ENCODE measurements at regions of chr14 and their contacts with region 1.

Region 1: GRCh38 chr14:72743626-72744025 is 150.3 kb downstream of the DPF3 start:
- DNase-seq: no peak
- H3K4me3 ChIP-seq: no peak overlapping the region
- H3K27me3 ChIP-seq: no peaks in the 10 kb centered on the region
- CTCF ChIP-seq: no peak

Region 2: GRCh38 chr14:72476657-72477499 is 266.7 kb before region 1 on chr14:
- CTCF ChIA-PET with region 1: no interaction called
- POLR2A ChIA-PET with region 1: no interaction called
- DNase-seq: peak; percentile 66
- H3K4me3 ChIP-seq: no peak overlapping the region
- H3K27me3 ChIP-seq: peaks cover 8% of the 10 kb centered on the region
- CTCF ChIP-seq: no peak

Region 3: DNA sequence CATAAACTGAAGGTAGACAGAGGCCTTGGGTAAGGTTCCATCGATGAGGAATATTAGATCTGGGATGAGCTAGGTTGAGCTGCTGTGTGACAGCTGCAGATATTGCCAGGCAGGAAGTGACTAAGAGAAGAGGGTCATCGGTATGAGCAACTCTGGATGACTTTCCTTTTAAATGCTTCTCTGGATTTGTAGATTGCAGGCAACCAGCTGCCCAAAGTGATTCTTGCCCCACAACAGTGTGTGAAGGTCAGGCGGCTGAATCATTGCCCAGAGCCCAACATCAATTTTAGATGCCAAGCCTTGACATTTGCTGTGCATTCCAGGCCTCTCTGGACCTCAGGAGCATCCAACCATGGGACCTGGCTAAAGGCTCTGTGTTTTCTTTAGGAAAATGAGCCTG is 105.6 kb before region 1 on chr14:
- CTCF ChIA-PET with region 1: no interaction called
- POLR2A ChIA-PET with region 1: interaction called, 10 read pairs
- DNase-seq: peak; percentile 46
- H3K4me3 ChIP-seq: no peak overlapping the region
- H3K27me3 ChIP-seq: no peaks in the 10 kb centered on the region
- CTCF ChIP-seq: no peak

Region 4: DNA sequence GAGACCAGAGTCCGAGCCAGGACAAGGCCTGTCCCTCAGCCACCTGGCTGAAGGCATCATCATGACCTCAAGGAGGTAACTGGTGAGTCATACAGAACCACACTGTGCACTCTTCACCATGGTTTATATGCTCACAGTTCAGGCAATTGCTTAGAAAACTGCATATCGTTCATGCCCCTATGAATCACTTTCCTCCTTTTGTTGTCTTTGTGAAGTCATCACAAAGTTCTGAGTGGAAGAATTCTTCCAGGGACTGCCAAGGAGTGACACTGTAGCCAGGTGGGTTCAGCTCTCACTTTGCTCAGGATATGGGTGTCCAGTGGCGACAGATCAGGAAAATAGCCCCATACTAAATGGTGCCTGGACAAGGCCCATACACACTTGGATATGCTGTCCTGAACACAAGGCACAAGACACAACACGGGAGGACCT is 57.8 kb after region 1 on chr14:
- CTCF ChIA-PET with region 1: no interaction called
- POLR2A ChIA-PET with region 1: no interaction called
- DNase-seq: peak; percentile 62
- H3K4me3 ChIP-seq: no peak overlapping the region
- H3K27me3 ChIP-seq: no peaks in the 10 kb centered on the region
- CTCF ChIP-seq: no peak